ENCODE measurements at regions of chrX and their contacts with region 1.

Region 1: DNA sequence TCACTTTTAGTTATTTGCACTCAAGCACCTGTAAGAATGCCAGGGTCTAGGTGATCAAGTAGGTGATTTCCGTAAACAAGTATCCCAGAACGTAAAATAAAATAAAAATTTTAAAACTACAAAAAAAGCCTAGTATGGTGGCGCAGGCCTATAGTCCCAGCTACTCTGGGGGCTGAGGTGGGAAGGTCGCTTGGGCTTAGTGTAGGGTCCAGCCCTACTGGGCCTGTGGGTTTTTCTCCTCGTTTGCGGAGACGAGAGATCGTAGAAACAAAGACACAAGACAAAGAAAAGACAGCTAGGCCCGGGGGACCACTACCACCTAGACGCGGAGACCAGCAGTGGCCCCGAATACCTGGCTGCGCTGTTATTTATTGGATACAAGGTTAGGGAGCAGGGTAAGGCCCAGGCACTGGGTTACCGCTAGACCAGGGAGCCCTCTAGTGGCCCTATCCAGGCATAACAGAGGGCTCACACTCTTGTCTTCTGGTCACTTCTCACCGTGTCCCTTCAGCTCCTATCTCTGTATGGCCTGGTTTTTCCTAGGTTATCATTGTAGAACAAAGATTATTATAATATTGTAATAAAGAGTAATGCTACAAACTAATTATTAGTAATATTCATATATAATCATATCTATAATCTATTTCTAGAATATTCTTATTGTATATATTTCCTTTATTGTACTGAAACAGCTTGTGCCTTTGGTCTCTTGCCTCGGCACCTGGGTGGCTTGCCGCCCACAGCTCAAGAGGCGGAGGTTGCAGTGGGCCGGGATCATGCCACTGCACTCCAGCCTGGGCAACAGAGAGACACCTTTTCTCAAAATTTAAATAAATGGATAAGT is 38.4 kb downstream of the SAGE1 start:
- DNase-seq: peak; percentile 29
- H3K4me3 ChIP-seq: no peak overlapping the region
- H3K27ac ChIP-seq: no peak overlapping the region
- H3K4me1 ChIP-seq: no peaks in the 10 kb centered on the region
- H3K27me3 ChIP-seq: peaks cover 15% of the 10 kb centered on the region
- CTCF ChIP-seq: peak; percentile 74
- EP300 ChIP-seq: no peak
- RAD21 ChIP-seq: peak; percentile 63

Region 2: GRCh38 chrX:135914404-135914803 is 17.5 kb before region 1 on chrX:
- CTCF ChIA-PET with region 1: interaction called, 10 read pairs
- POLR2A ChIA-PET with region 1: no interaction called
- DNase-seq: no peak
- H3K4me3 ChIP-seq: no peak overlapping the region
- H3K27ac ChIP-seq: no peak overlapping the region
- H3K4me1 ChIP-seq: no peaks in the 10 kb centered on the region
- H3K27me3 ChIP-seq: peaks cover 23% of the 10 kb centered on the region
- CTCF ChIP-seq: no peak
- EP300 ChIP-seq: no peak
- RAD21 ChIP-seq: no peak

Region 3: GRCh38 chrX:135944486-135944885 is 12.6 kb after region 1 on chrX:
- CTCF ChIA-PET with region 1: interaction called, 11 read pairs
- POLR2A ChIA-PET with region 1: no interaction called
- DNase-seq: no peak
- H3K4me3 ChIP-seq: no peak overlapping the region
- H3K27ac ChIP-seq: no peak overlapping the region
- H3K4me1 ChIP-seq: no peaks in the 10 kb centered on the region
- H3K27me3 ChIP-seq: no peaks in the 10 kb centered on the region
- CTCF ChIP-seq: no peak
- EP300 ChIP-seq: no peak
- RAD21 ChIP-seq: no peak